ENCODE measurements at regions of chr9 and their contacts with region 1.

Region 1: GRCh38 chr9:72726947-72727346 is 205.5 kb downstream of the TMC1 start:
- DNase-seq: no peak
- H3K4me3 ChIP-seq: no peak overlapping the region
- H3K27ac ChIP-seq: no peak overlapping the region
- H3K4me1 ChIP-seq: no peaks in the 10 kb centered on the region
- H3K27me3 ChIP-seq: no peaks in the 10 kb centered on the region
- CTCF ChIP-seq: no peak
- EP300 ChIP-seq: no peak
- POLR2A ChIP-seq: no peak

Region 2: DNA sequence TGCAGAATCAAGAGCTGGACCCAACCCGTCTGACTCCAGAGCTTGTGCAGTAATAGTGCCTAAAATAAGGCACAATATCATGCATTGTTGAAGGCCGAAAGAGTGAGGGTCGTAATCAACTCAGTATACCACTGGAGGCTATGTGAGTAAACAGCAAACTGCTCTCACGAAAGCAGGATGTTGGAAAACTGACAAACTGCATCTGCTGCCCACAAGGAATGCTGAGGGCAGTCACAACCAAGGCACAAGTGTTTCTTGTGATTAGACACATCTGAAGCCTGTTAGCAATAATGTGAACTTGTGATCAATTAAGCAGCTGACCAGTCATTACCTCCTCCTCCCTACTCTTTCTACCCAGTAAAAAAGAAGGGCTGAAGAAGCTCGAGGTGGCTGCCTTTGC is 1654.4 kb before region 1 on chr9:
- in situ Hi-C with region 1: no loop called
- intact Hi-C with region 1: loop called (anchors 5 kb)
- DNase-seq: no peak
- H3K4me3 ChIP-seq: no peak overlapping the region
- H3K27ac ChIP-seq: no peak overlapping the region
- H3K4me1 ChIP-seq: no peaks in the 10 kb centered on the region
- H3K27me3 ChIP-seq: no peaks in the 10 kb centered on the region
- CTCF ChIP-seq: no peak
- EP300 ChIP-seq: no peak
- POLR2A ChIP-seq: no peak

Region 3: GRCh38 chr9:73023025-73023541 is 296.1 kb after region 1 on chr9:
- in situ Hi-C with region 1: no loop called
- intact Hi-C with region 1: no loop called
- DNase-seq: peak; percentile 67
- H3K4me3 ChIP-seq: no peak overlapping the region
- H3K27ac ChIP-seq: peak overlapping the region in 3 of 4 donors; percentile 20 to 38 (median 30)
- H3K4me1 ChIP-seq: peaks cover 0 to 7% (median 6%) of the 10 kb centered on the region in 4 donors
- H3K27me3 ChIP-seq: no peaks in the 10 kb centered on the region
- CTCF ChIP-seq: peak; percentile 79 to 89 (median 86)
- EP300 ChIP-seq: no peak
- POLR2A ChIP-seq: no peak

Measured in transverse colon (tissue), 4 donors.